B cell (primary cell): ENCODE measurements at regions of chr1 and their contacts with region 1.

Region 1: GRCh38 chr1:21368515-21369289 is 71.2 kb upstream of the NBPF3 start:
- DNase-seq: peak; percentile 77
- ATAC-seq: peak; percentile 54
- H3K4me3 ChIP-seq: no peak overlapping the region
- H3K4me3 Mint-ChIP-seq: no peak overlapping the region
- H3K27ac ChIP-seq: no peak overlapping the region
- H3K27ac Mint-ChIP-seq: peak overlapping the region; percentile 50
- H3K4me1 ChIP-seq: peaks cover 10 to 20% of the 10 kb centered on the region in 2 donors
- H3K4me1 Mint-ChIP-seq: peaks cover 23% of the 10 kb centered on the region
- H3K27me3 ChIP-seq: no peaks in the 10 kb centered on the region
- H3K27me3 Mint-ChIP-seq: no peaks in the 10 kb centered on the region
- CTCF ChIP-seq: peak; percentile 98

Region 2: DNA sequence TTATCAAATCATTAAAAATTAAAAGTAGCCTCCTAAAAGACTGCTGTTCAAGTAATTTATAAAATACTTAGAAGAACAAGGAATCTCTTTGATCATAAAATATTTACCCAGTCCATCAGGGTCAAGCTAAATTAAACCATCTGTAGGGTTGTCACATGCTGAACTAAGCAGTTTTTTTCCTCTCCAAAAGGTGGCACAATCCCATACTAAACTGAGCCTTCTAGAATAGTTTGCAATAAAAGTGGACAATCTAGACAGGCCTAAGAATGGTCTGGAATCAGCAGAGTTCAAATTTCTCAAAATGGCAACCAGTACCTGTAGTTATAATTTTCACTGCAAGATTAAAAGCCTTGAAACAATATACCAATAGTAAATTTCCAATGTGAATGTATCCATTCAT is 386.8 kb before region 1 on chr1:
- CTCF ChIA-PET with region 1: no interaction called
- POLR2A ChIA-PET with region 1: no interaction called
- intact Hi-C with region 1: no loop called
- DNase-seq: no peak
- ATAC-seq: no peak
- H3K4me3 ChIP-seq: no peak overlapping the region
- H3K4me3 Mint-ChIP-seq: no peak overlapping the region
- H3K27ac ChIP-seq: peak overlapping the region in 1 of 2 donors; percentile 41
- H3K27ac Mint-ChIP-seq: no peak overlapping the region
- H3K4me1 ChIP-seq: no peaks in the 10 kb centered on the region
- H3K4me1 Mint-ChIP-seq: no peaks in the 10 kb centered on the region
- H3K27me3 ChIP-seq: no peaks in the 10 kb centered on the region
- H3K27me3 Mint-ChIP-seq: no peaks in the 10 kb centered on the region
- CTCF ChIP-seq: no peak

Region 3: DNA sequence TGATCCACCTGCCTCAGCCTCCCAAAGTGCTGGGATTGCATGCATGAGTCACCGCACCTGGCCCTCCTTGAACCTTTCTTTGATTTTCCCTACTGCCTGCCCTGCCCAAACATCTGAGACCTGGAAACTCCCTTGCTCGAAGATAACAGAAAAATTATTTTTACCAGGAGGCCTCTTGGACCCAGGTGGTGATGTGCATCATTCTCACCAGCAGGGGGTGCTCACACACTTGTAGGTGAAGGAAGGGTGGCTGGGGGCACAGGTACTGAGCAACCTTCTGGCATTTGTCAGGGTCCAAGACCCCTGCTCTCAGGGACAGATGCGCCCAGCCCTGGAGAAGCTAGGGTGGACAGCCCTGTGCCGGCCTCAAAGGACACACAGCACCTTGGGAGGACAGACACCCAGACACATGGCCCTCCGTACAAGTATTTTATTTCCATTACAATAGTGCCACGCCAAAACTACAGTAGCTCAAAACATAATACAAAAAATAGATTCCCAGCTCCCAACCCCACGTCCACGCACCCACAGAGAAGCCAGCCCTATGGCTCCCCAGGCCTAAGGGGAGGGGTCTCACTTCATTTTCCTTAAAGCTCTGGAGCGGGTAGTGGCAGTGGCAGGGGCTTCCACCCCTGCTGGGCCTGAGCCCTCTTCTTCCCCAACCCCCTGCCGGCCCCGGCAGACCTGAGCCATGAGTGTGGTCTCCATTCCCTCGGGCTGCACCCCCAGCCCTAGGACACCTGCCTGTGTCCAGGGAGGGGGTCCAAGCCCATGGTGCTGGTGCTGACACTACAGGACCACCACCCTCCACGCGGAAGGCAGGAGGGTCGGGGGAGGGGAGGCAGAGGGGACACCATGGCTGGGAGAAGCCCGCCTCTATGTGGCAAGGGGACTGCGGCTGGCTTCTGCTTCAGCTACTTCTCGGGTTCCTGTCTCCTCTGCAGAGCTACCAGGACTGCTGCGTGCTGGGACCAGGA is 151.6 kb before region 1 on chr1:
- CTCF ChIA-PET with region 1: interaction called, 95 read pairs
- POLR2A ChIA-PET with region 1: no interaction called
- intact Hi-C with region 1: loop called (anchors 5 kb)
- DNase-seq: peak; percentile 76
- ATAC-seq: peak; percentile 74
- H3K4me3 ChIP-seq: no peak overlapping the region
- H3K4me3 Mint-ChIP-seq: no peak overlapping the region
- H3K27ac ChIP-seq: peak overlapping the region in 1 of 2 donors; percentile 9
- H3K27ac Mint-ChIP-seq: no peak overlapping the region
- H3K4me1 ChIP-seq: no peaks in the 10 kb centered on the region
- H3K4me1 Mint-ChIP-seq: peaks cover 5% of the 10 kb centered on the region
- H3K27me3 ChIP-seq: no peaks in the 10 kb centered on the region
- H3K27me3 Mint-ChIP-seq: no peaks in the 10 kb centered on the region
- CTCF ChIP-seq: peak; percentile 78

Region 4: DNA sequence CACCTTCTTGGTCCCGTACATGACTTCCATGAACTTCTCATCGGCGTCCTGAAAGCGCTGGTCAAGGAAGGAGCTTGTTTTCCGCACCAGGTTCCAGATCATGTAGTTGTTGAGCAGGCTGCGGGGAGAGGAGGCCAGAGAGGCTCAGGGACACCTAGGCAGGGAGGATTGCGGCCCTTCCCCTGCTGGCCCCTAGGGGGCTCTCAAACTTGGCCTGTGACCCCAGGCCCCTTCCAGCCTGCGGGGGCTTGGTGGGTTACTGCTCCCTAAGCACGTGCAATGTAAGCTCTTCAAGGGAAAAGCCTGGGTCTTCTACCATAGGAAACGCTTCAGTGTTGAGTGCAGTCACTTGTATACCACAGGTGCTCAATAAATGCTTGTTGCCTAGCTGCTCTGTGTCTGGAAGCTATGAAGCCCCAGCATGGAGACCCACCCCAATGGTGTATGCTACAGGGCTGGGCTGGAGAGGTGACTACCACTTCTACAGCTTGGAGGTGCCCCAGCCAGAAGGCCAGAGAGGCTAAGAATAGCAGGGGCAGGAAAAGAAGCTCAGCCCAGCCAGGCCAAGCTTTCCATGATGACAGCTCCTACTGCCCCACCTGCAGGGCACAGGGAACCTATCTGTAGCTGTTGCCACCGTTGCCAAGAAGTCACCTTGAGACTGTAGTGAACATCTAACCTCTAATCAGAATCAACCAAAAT is 123.6 kb before region 1 on chr1:
- CTCF ChIA-PET with region 1: interaction called, 33 read pairs
- POLR2A ChIA-PET with region 1: no interaction called
- intact Hi-C with region 1: no loop called
- DNase-seq: no peak
- ATAC-seq: no peak
- H3K4me3 ChIP-seq: no peak overlapping the region
- H3K4me3 Mint-ChIP-seq: no peak overlapping the region
- H3K27ac ChIP-seq: no peak overlapping the region
- H3K27ac Mint-ChIP-seq: no peak overlapping the region
- H3K4me1 ChIP-seq: no peaks in the 10 kb centered on the region
- H3K4me1 Mint-ChIP-seq: no peaks in the 10 kb centered on the region
- H3K27me3 ChIP-seq: no peaks in the 10 kb centered on the region
- H3K27me3 Mint-ChIP-seq: no peaks in the 10 kb centered on the region
- CTCF ChIP-seq: peak; percentile 49

Region 5: GRCh38 chr1:21280011-21280471 is 88.7 kb before region 1 on chr1:
- CTCF ChIA-PET with region 1: interaction called, 14 read pairs
- POLR2A ChIA-PET with region 1: no interaction called
- intact Hi-C with region 1: no loop called
- DNase-seq: no peak
- ATAC-seq: peak; percentile 35
- H3K4me3 ChIP-seq: peak overlapping the region in 2 of 5 experiments; percentile 7 to 51
- H3K4me3 Mint-ChIP-seq: peak overlapping the region; percentile 58
- H3K27ac ChIP-seq: peak overlapping the region; percentile 7 to 71
- H3K27ac Mint-ChIP-seq: peak overlapping the region; percentile 89
- H3K4me1 ChIP-seq: peaks cover 26 to 28% of the 10 kb centered on the region in 2 donors
- H3K4me1 Mint-ChIP-seq: peaks cover 38% of the 10 kb centered on the region
- H3K27me3 ChIP-seq: no peaks in the 10 kb centered on the region
- H3K27me3 Mint-ChIP-seq: no peaks in the 10 kb centered on the region
- CTCF ChIP-seq: no peak

Region 6: GRCh38 chr1:21324368-21325141 is 44.1 kb before region 1 on chr1:
- CTCF ChIA-PET with region 1: interaction called, 17 read pairs
- POLR2A ChIA-PET with region 1: no interaction called
- intact Hi-C with region 1: no loop called
- DNase-seq: peak; percentile 65
- ATAC-seq: peak; percentile 67
- H3K4me3 ChIP-seq: peak overlapping the region in 4 of 5 experiments; percentile 4 to 16 (median 14)
- H3K4me3 Mint-ChIP-seq: peak overlapping the region; percentile 81
- H3K27ac ChIP-seq: peak overlapping the region; percentile 63 to 64
- H3K27ac Mint-ChIP-seq: peak overlapping the region; percentile 93
- H3K4me1 ChIP-seq: peaks cover 50 to 56% of the 10 kb centered on the region in 2 donors
- H3K4me1 Mint-ChIP-seq: peaks cover 71% of the 10 kb centered on the region
- H3K27me3 ChIP-seq: no peaks in the 10 kb centered on the region
- H3K27me3 Mint-ChIP-seq: no peaks in the 10 kb centered on the region
- CTCF ChIP-seq: no peak

Region 7: DNA sequence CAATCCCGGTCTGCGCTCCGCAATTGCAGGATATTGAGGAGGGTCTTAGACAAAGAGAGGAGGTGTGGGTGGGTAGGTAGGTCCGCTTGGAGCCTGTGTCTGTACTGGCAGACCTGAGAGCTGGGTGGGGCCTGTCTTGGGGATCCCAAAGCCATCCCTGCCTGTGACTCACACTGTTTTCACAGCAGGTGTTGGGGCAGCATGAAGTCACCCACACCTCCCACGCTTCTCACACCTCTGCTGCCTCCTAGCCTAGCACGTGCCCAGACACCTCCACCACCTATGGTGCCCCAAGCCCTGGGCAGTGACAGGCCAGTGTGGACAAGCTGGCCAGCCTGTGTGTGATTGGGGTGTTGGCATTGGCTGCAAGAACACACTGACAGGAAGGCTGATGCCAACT is 12.7 kb before region 1 on chr1:
- CTCF ChIA-PET with region 1: interaction called, 16 read pairs
- POLR2A ChIA-PET with region 1: no interaction called
- intact Hi-C with region 1: no loop called
- DNase-seq: no peak
- ATAC-seq: no peak
- H3K4me3 ChIP-seq: no peak overlapping the region
- H3K4me3 Mint-ChIP-seq: no peak overlapping the region
- H3K27ac ChIP-seq: no peak overlapping the region
- H3K27ac Mint-ChIP-seq: no peak overlapping the region
- H3K4me1 ChIP-seq: no peaks in the 10 kb centered on the region
- H3K4me1 Mint-ChIP-seq: no peaks in the 10 kb centered on the region
- H3K27me3 ChIP-seq: no peaks in the 10 kb centered on the region
- H3K27me3 Mint-ChIP-seq: no peaks in the 10 kb centered on the region
- CTCF ChIP-seq: no peak

Region 8: DNA sequence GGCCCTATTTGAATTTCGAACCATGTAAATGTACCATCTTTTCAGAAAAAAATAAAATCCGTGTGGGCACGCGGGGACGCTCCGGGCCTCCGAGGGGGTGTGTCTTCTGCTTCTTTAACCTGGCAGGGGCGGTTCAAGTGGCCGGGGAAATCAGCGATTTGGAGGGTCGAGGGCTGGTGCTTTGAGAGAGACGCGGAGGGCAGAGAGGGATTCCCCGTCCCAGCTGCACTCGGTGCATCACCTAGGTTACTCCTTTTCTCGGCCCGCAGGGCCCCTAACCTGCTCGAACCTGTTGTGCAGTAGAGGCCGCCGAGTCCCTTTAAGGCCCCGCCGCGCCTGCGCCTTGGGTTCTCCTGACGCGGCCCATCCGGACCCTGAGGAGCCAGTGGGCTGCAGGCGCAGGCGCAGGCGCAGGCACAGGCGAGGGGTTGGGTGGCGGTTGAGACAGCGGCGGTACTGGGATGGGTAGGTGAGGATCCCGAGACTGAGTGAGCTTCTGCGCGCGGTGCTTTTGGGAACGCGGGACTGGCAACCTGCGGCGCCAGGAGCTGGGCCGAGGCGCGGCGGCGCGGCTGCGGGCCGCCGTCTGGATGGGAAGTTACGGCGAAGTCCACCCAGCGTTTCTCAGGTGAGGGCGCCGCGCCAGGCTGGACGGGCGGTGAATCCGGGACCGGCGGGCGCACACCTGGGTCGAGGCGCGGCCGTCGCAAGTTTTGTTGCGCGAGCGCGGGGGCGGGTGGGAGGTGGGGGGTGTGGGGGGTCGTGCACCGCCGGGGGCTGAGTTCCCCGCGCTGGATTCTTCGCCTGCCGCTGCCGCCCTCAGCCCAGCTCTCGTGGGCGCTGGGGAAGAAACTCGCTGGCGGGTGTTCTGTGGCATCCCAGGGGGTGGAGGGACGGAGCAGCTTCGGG is 71.3 kb after region 1 on chr1 and contains the start of gene NBPF3:
- CTCF ChIA-PET with region 1: no interaction called
- POLR2A ChIA-PET with region 1: no interaction called
- intact Hi-C with region 1: no loop called
- DNase-seq: peak; percentile 80
- ATAC-seq: peak; percentile 96
- H3K4me3 ChIP-seq: peak within 1 kb of the TSS in 4 of 5 experiments; percentile 46 to 77 (median 70)
- H3K4me3 Mint-ChIP-seq: peak within 1 kb of the TSS; percentile 95
- H3K27ac ChIP-seq: peak within 1 kb of the TSS in 1 of 2 donors; percentile 70
- H3K27ac Mint-ChIP-seq: peak within 1 kb of the TSS; percentile 79
- H3K4me1 ChIP-seq: peaks cover 8 to 11% of the 10 kb centered on the region in 2 donors
- H3K4me1 Mint-ChIP-seq: peaks cover 13% of the 10 kb centered on the region
- H3K27me3 ChIP-seq: peaks cover 0 to 25% (median 0%) of the 10 kb centered on the region in 4 experiments
- H3K27me3 Mint-ChIP-seq: peaks cover 21% of the 10 kb centered on the region
- CTCF ChIP-seq: no peak
- total RNA-seq, gene NBPF3: 4.2 and 5.6 TPM in 2 replicates